H1 (cell line): ENCODE measurements at regions of chr19 and their contacts with region 1.

Region 1: DNA sequence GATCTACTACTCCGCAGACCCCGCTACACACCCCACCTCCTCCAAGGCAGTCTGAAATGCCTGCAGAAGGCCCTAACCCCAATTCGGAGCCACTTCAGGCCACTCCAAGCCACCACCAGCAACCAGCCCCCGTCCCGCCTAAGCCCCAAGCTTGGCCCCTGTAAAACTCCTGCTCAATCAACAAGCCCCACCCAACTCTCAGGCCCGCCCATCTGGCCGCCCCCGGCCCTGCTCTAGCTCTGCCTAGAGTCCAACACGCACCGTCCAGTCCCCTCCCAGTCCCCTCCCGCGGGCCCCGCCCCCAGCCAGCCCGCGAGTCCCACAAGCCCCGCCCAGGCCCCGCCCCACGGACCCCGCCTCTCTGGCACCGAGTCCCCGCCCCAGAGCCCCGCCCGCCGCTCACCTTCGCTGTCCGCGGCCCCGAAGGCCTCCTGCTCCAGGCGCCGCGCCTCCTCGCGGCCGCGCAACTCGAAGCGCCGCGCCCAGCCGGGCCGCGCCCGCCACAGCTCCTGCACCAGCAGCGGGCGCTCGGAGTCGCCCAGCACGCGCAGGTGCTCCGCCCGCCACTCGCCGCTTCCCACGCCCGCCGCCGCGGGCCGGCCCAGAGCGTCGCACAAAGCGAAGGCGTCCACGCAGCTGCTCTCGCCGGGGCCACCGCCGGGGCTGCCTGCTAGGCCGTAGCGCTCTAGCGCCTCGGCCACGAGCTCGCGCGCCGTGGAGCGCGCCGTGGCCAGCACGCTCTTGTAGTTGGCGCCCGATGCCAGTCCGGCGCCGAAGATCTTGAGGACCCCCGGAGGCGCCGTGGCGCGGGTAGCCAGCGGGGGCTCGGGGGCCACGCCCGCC is 1.6 kb downstream of the RASIP1 start:
- DNase-seq: peak; percentile 89 to 99
- H3K4me3 ChIP-seq: peak overlapping the region; percentile 38 to 75 (median 52)
- H3K27ac ChIP-seq: no peak overlapping the region
- H3K4me1 ChIP-seq: peaks cover 5 to 26% (median 22%) of the 10 kb centered on the region in 4 experiments
- H3K27me3 ChIP-seq: peaks cover 3 to 19% (median 12%) of the 10 kb centered on the region in 4 experiments; a peak in 6 of 7 replicates
- CTCF ChIP-seq: peak; percentile 48 to 86 (median 56)
- EP300 ChIP-seq: no peak
- POLR2A ChIP-seq: no peak
- RAD21 ChIP-seq: peak; percentile 27 to 65

Region 2: GRCh38 chr19:48433337-48433736 is 305.4 kb before region 1 on chr19:
- CTCF ChIA-PET with region 1: no interaction called
- POLR2A ChIA-PET with region 1: no interaction called
- DNase-seq: no peak
- H3K4me3 ChIP-seq: no peak overlapping the region
- H3K27ac ChIP-seq: no peak overlapping the region
- H3K4me1 ChIP-seq: no peaks in the 10 kb centered on the region
- H3K27me3 ChIP-seq: no peaks in the 10 kb centered on the region
- CTCF ChIP-seq: no peak
- EP300 ChIP-seq: no peak
- POLR2A ChIP-seq: no peak
- RAD21 ChIP-seq: no peak; a peak in 1 of 4 replicates

Region 3: GRCh38 chr19:48698046-48698445 is 40.7 kb before region 1 on chr19:
- CTCF ChIA-PET with region 1: interaction called, 4 read pairs
- POLR2A ChIA-PET with region 1: interaction called, 22 read pairs
- DNase-seq: no peak
- H3K4me3 ChIP-seq: no peak overlapping the region
- H3K27ac ChIP-seq: no peak overlapping the region
- H3K4me1 ChIP-seq: peaks cover 0 to 5% (median 1%) of the 10 kb centered on the region in 4 experiments; a peak in 4 of 7 replicates
- H3K27me3 ChIP-seq: no peaks in the 10 kb centered on the region
- CTCF ChIP-seq: no peak
- EP300 ChIP-seq: no peak
- POLR2A ChIP-seq: no peak
- RAD21 ChIP-seq: no peak

Region 4: DNA sequence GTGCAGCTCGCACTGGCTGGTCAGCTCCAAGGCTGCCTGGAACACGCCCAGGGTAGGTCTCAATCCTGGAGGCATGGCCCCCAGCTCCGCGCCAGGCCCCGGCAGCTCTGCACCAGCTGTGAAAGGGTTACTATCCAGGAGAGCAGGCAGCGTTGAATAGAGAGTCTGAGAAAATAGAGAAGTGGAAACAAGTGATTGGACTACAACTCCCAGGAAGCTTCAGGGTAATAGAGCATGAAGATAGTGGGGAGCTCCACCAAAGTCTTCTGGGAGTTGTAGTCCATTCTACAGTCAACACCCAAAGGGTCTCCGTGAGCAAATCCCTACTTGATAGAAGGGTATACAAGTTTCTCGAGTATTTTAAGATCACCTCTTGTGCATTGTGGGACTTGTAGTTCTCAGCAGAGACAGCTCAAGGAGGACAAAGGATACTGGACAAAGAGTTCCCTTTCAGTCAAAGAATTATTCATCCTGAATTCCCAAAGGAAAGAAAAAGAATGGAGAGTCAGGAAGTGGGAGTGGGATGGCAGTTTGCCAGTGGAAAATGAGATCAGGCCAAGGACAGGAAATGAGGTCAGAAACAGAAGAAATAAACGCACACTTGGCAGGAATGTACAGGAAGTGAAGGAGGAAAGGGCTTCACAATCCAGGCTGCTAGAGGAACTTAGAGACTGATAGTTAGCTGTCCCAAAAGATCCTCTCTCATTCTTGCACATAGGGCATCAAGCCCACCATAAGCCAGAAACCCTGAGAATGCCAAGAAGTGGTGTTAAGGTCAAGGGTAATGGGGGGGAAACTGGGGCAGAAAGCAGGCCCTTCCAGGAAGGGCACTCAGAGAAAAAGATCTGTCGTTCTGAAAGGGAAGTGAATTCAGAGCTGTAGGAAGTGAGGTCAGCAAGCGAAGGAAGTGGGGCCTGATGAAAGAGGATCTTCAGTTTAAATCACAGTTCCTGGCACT is 13.7 kb before region 1 on chr19:
- CTCF ChIA-PET with region 1: interaction called, 19 read pairs
- POLR2A ChIA-PET with region 1: interaction called, 16 read pairs
- DNase-seq: no peak
- H3K4me3 ChIP-seq: no peak overlapping the region
- H3K27ac ChIP-seq: no peak overlapping the region
- H3K4me1 ChIP-seq: peaks cover 0 to 11% (median under 1%) of the 10 kb centered on the region in 4 experiments; a peak in 4 of 7 replicates
- H3K27me3 ChIP-seq: no peaks in the 10 kb centered on the region
- CTCF ChIP-seq: no peak
- EP300 ChIP-seq: no peak
- POLR2A ChIP-seq: no peak
- RAD21 ChIP-seq: no peak

Region 5: GRCh38 chr19:48752498-48753365 is 14.0 kb after region 1 on chr19 and contains the start of gene FUT1:
- CTCF ChIA-PET with region 1: interaction called, 8 read pairs
- POLR2A ChIA-PET with region 1: interaction called, 21 read pairs
- DNase-seq: peak; percentile 61 to 94
- H3K4me3 ChIP-seq: peak within 1 kb of the TSS; percentile 92 to 97 (median 96)
- H3K27ac ChIP-seq: peak within 1 kb of the TSS; percentile 64; the same call in 1 of the 2 replicates
- H3K4me1 ChIP-seq: peaks cover 3 to 25% (median 18%) of the 10 kb centered on the region in 4 experiments
- H3K27me3 ChIP-seq: no peaks in the 10 kb centered on the region
- CTCF ChIP-seq: peak in 2 of 3 experiments; percentile 14 to 28; a peak in 2 of 4 replicates
- EP300 ChIP-seq: peak in 1 of 2 experiments; percentile 54; a peak in 1 of 3 replicates
- POLR2A ChIP-seq: peak in 1 of 2 experiments; percentile 73; a peak in 2 of 3 replicates
- RAD21 ChIP-seq: no peak; a peak in 1 of 4 replicates
- total RNA-seq, gene FUT1: 12.2 and 12.9 TPM in 2 replicates